K562 (cell line): ENCODE measurements at regions of chr20 and their contacts with region 1.

Region 1: GRCh38 chr20:20083807-20084206 is 31.5 kb downstream of the CFAP61 start:
- DNase-seq: peak in 3 of 4 experiments; percentile 6 to 10 (median 7)
- ATAC-seq: peak; percentile 69; the same call in 2 of the 3 replicates
- H3K4me3 ChIP-seq: no peak overlapping the region
- H3K27ac ChIP-seq: no peak overlapping the region
- H3K4me1 ChIP-seq: no peaks in the 10 kb centered on the region
- H3K27me3 ChIP-seq: no peaks in the 10 kb centered on the region; a peak in 1 of 5 replicates
- CTCF ChIP-seq: peak; percentile 12 to 56 (median 30); a peak in 3 of 6 replicates
- EP300 ChIP-seq: no peak
- POLR2A ChIP-seq: no peak
- RAD21 ChIP-seq: peak in 1 of 2 experiments; percentile 64; a peak in 3 of 4 replicates

Region 2: GRCh38 chr20:20237093-20237959 is 153.5 kb after region 1 on chr20:
- CTCF ChIA-PET with region 1: interaction called, 4 read pairs
- POLR2A ChIA-PET with region 1: no interaction called
- in situ Hi-C with region 1: no loop called
- intact Hi-C with region 1: loop called (anchors 1 kb)
- DNase-seq: peak; percentile 35 to 54 (median 53)
- ATAC-seq: peak; percentile 78
- H3K4me3 ChIP-seq: no peak overlapping the region
- H3K27ac ChIP-seq: no peak overlapping the region
- H3K4me1 ChIP-seq: peaks cover 0 to 5% of the 10 kb centered on the region in 2 experiments; a peak in 2 of 5 replicates
- H3K27me3 ChIP-seq: peaks cover 0 to 5% of the 10 kb centered on the region in 2 experiments; a peak in 3 of 5 replicates
- CTCF ChIP-seq: peak; percentile 57 to 65 (median 60)
- EP300 ChIP-seq: no peak
- POLR2A ChIP-seq: no peak
- RAD21 ChIP-seq: peak; percentile 14 to 60; a peak in 3 of 4 replicates

Region 3: GRCh38 chr20:20568604-20569205 is 484.9 kb after region 1 on chr20:
- CTCF ChIA-PET with region 1: interaction called, 6 read pairs
- POLR2A ChIA-PET with region 1: no interaction called
- in situ Hi-C with region 1: loop called (anchors 25 kb)
- intact Hi-C with region 1: loop called (anchors 1 kb)
- DNase-seq: peak; percentile 5 to 20 (median 10)
- ATAC-seq: 0 out of 3 replicates have a peak, but pooled peaks have one; percentile 44
- H3K4me3 ChIP-seq: no peak overlapping the region
- H3K27ac ChIP-seq: no peak overlapping the region
- H3K4me1 ChIP-seq: no peaks in the 10 kb centered on the region
- H3K27me3 ChIP-seq: no peaks in the 10 kb centered on the region
- CTCF ChIP-seq: peak; percentile 52 to 78 (median 55); a peak in 5 of 6 replicates
- EP300 ChIP-seq: no peak
- POLR2A ChIP-seq: no peak
- RAD21 ChIP-seq: peak; percentile 75 to 77

Region 4: GRCh38 chr20:20593447-20594170 is 509.8 kb after region 1 on chr20:
- CTCF ChIA-PET with region 1: interaction called, 6 read pairs
- POLR2A ChIA-PET with region 1: no interaction called
- in situ Hi-C with region 1: no loop called
- intact Hi-C with region 1: loop called (anchors 10 kb)
- DNase-seq: peak; percentile 4 to 39 (median 16)
- ATAC-seq: peak; percentile 84
- H3K4me3 ChIP-seq: no peak overlapping the region
- H3K27ac ChIP-seq: no peak overlapping the region
- H3K4me1 ChIP-seq: no peaks in the 10 kb centered on the region
- H3K27me3 ChIP-seq: no peaks in the 10 kb centered on the region
- CTCF ChIP-seq: peak; percentile 54 to 84 (median 58)
- EP300 ChIP-seq: no peak
- POLR2A ChIP-seq: no peak
- RAD21 ChIP-seq: peak in 1 of 2 experiments; percentile 46; a peak in 2 of 4 replicates

Region 5: DNA sequence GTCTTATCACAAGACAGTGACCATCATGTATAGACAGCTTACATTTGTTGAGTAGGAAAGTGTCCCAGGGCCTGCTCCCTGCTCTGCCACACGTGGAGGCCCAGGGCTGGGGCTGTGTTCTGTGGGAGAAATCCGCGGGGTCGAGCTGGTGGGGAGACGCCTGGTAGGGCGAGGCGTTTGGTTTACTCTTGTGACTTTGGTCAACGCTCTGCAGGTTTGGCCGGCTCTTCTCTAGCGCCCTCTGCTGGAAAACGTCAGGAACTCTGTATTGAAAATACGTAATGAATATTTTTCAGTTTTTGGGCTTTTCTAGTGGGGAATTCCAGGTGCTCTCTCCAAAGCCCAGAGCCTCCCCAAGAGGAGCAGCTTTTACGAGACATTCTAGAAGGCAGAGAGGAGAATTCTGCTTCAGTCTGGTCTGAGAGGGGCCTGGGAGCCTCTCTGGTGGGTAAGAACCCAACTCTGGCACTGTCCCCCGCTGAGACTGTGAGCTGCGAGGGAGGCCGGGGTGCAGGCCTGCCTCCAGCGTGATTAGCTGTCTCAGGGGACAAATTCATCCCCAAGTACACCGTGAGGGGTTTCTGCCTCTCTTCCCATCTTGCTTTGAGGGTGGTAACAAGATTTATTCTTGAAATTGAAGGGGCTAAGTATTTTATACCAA is 741.2 kb after region 1 on chr20:
- CTCF ChIA-PET with region 1: no interaction called
- POLR2A ChIA-PET with region 1: no interaction called
- in situ Hi-C with region 1: loop called (anchors 25 kb)
- intact Hi-C with region 1: loop called (anchors 5 kb)
- DNase-seq: peak; percentile 42 to 54 (median 47)
- ATAC-seq: peak; percentile 77
- H3K4me3 ChIP-seq: no peak overlapping the region
- H3K27ac ChIP-seq: no peak overlapping the region
- H3K4me1 ChIP-seq: no peaks in the 10 kb centered on the region; a peak in 1 of 5 replicates
- H3K27me3 ChIP-seq: peaks cover 0 to 6% of the 10 kb centered on the region in 2 experiments; a peak in 3 of 5 replicates
- CTCF ChIP-seq: peak; percentile 52 to 70 (median 65); a peak in 5 of 6 replicates
- EP300 ChIP-seq: no peak
- POLR2A ChIP-seq: no peak
- RAD21 ChIP-seq: peak; percentile 37 to 60